GM12878 (cell line): ENCODE measurements at regions of chr7 and their contacts with region 1.

Region 1: DNA sequence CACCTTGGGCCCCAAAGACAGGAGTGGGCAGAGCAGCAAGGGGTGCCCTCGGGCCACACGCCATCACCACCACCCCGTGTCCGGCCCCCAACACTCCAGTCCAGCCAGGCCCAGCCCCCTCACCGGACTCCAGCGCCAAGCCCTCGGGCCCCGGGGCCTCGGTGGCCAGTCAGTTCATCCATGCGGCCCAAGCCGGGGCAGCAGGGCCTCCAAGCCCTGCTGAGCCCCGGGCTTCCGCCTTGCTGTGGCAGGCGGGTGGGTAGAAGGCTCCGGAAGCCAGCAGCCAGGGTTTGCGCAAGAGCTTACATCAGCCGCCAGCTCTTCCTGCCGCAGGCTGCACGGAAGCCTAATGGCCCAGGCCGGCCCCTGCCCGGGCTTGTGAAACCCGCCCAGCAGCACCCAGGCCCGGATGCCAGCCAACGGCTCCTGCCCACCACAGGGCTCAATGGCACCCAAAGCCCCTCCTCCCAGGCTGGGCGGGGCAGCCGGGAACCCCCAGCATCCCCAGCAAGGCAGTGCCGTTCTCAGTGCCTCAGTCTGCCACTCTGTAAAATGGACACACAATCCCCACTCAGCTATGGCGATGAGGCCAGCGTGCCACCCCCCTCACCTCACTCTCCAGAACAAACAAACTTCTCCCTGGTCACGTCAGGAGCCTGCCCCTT is 26.5 kb downstream of the TNRC18 start:
- DNase-seq: peak; percentile 77
- ATAC-seq: peak; percentile 96
- H3K4me3 ChIP-seq: peak overlapping the region; percentile 96
- H3K27ac ChIP-seq: peak overlapping the region; percentile 88
- H3K4me1 ChIP-seq: peaks cover 5% of the 10 kb centered on the region; the same call in 1 of the 2 replicates
- H3K27me3 ChIP-seq: no peaks in the 10 kb centered on the region
- CTCF ChIP-seq: no peak
- EP300 ChIP-seq: peak in 1 of 2 experiments; percentile 46; a peak in 2 of 4 replicates
- POLR2A ChIP-seq: peak; percentile 82
- RAD21 ChIP-seq: no peak

Region 2: DNA sequence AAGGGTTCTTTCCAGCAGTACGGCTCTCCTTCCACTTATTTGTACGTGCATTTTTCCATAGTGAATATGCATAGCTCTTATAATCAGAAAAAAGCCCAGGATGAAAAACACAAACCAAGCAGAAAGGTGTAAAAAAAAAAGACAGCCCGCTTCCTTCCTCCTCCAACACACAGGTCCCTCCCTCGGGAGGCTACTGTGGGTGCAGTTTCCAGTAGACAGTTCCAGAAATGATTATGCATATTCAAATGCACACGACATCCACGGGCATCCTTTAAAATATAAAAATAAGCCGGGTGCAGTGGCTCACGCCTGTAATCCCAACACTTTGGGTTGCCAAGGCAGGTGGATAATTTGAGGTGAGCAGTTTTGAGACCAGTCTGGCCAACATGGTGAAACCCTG is 33.4 kb before region 1 on chr7:
- CTCF ChIA-PET with region 1: interaction called, 34 read pairs
- POLR2A ChIA-PET with region 1: interaction called, 7 read pairs
- RAD21 ChIA-PET with region 1: interaction called, 18 read pairs
- SMC1A ChIA-PET with region 1: interaction called, 7 read pairs
- in situ Hi-C with region 1: no loop called
- intact Hi-C with region 1: no loop called
- DNase-seq: no peak
- ATAC-seq: peak; percentile 38; the same call in 2 of the 3 replicates
- H3K4me3 ChIP-seq: peak overlapping the region; percentile 16; the same call in 1 of the 2 replicates
- H3K27ac ChIP-seq: no peak overlapping the region
- H3K4me1 ChIP-seq: peaks cover 16% of the 10 kb centered on the region
- H3K27me3 ChIP-seq: no peaks in the 10 kb centered on the region
- CTCF ChIP-seq: no peak
- EP300 ChIP-seq: no peak
- POLR2A ChIP-seq: no peak
- RAD21 ChIP-seq: no peak

Region 3: DNA sequence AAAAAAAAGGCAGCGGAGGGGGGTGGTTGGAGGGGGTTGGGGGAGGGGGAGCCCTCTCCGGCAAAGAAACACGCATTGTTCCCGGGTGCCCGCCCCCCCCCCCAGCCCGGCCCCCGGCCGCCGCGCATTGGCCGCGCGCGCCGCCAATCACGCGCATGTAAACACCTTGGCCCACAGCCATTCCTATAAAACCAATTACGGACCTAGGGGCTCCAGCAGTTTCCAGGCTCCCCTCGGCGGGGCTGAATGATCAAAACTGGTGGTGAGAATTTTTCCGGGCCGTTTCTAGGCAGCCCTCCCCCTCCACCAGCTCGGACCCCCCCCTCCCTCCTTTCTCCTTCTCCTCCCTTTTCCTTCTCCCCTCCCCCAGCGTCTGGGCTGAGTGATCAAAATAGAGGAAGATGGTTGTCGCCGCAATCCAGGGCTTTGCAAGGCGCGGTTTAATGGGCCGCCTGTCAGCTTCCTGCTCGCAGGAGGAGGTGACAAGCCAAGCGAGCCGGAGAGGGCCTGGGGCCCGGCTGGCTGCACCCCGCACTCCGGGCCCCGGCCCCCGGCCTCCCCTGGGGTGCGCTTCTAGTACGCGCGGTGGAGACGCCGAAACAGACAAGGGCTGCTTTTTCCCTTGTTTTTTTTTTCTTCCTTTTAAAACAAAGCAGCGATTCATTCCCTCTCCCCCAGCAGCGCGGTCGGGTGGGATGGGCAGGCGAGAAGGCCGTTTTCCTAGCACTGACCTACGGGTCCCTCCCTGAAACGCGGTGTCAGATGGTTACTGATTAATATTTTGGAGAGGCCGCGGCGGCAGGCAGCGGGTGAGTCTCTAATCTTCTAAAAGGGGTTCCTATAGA is 26.9 kb after region 1 on chr7:
- CTCF ChIA-PET with region 1: interaction called, 14 read pairs
- POLR2A ChIA-PET with region 1: interaction called, 19 read pairs
- RAD21 ChIA-PET with region 1: no interaction called
- SMC1A ChIA-PET with region 1: interaction called, 14 read pairs
- in situ Hi-C with region 1: no loop called
- intact Hi-C with region 1: no loop called
- DNase-seq: no peak
- ATAC-seq: peak; percentile 39
- H3K4me3 ChIP-seq: peak overlapping the region; percentile 53; the same call in 1 of the 2 replicates
- H3K27ac ChIP-seq: no peak overlapping the region
- H3K4me1 ChIP-seq: peaks cover 10% of the 10 kb centered on the region
- H3K27me3 ChIP-seq: peaks cover 29 to 62% of the 10 kb centered on the region in 2 experiments
- CTCF ChIP-seq: no peak
- EP300 ChIP-seq: no peak
- POLR2A ChIP-seq: no peak
- RAD21 ChIP-seq: no peak

Region 4: GRCh38 chr7:5435289-5436002 is 38.3 kb after region 1 on chr7:
- CTCF ChIA-PET with region 1: interaction called, 6 read pairs
- POLR2A ChIA-PET with region 1: interaction called, 6 read pairs
- RAD21 ChIA-PET with region 1: interaction called, 23 read pairs
- SMC1A ChIA-PET with region 1: interaction called, 8 read pairs
- in situ Hi-C with region 1: no loop called
- intact Hi-C with region 1: no loop called
- DNase-seq: peak; percentile 41
- ATAC-seq: peak; percentile 91
- H3K4me3 ChIP-seq: no peak overlapping the region
- H3K27ac ChIP-seq: no peak overlapping the region
- H3K4me1 ChIP-seq: peaks cover 10% of the 10 kb centered on the region
- H3K27me3 ChIP-seq: peaks cover 4 to 5% of the 10 kb centered on the region in 2 experiments; a peak in 3 of 4 replicates
- CTCF ChIP-seq: no peak
- EP300 ChIP-seq: peak in 1 of 2 experiments; percentile 45; a peak in 1 of 4 replicates
- POLR2A ChIP-seq: no peak
- RAD21 ChIP-seq: no peak

Region 5: DNA sequence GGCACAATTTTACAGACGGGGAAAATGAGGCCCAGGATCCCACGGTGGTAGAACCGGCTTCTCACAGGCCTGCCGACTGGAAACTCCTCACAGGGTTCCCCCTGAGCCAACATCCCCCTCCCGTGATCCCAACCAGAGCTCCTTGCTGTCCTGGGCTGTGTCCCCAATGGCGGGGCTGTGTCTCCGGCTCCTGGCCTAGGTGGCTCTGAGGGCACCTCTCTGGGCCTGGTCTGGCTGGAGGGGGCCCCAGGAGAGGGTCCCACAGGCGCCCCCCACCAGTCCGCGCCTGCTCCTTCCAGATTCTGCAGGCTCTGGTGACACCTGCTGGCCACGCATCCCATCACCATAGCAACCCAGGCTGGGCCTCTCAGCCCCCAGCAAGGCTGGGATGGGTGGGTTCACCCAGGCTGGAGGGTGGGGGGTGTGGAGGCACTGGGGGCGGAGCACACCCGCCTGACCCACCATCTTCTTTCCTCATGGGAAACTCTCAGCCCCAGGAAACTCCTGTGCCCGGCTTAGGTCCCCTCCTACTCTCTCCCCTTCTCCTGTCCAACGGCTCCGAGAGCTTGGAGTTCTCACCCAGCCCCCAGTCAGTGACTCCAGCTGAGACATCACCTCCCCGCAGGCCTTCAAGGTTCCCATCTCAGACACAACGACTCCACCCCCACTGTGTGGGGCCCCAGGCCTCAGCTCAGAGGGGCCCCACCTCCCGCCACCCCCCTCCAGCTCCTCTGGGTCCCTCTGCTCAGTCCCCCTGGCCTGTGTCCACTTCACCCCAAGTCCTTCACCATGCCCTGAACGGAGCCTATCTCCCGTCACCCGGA is 53.6 kb after region 1 on chr7:
- CTCF ChIA-PET with region 1: interaction called, 80 read pairs
- POLR2A ChIA-PET with region 1: interaction called, 10 read pairs
- RAD21 ChIA-PET with region 1: interaction called, 84 read pairs
- SMC1A ChIA-PET with region 1: interaction called, 41 read pairs
- in situ Hi-C with region 1: no loop called
- intact Hi-C with region 1: no loop called
- DNase-seq: no peak
- ATAC-seq: peak; percentile 92
- H3K4me3 ChIP-seq: no peak overlapping the region
- H3K27ac ChIP-seq: no peak overlapping the region
- H3K4me1 ChIP-seq: no peaks in the 10 kb centered on the region
- H3K27me3 ChIP-seq: no peaks in the 10 kb centered on the region; a peak in 1 of 4 replicates
- CTCF ChIP-seq: peak; percentile 48 to 70 (median 61)
- EP300 ChIP-seq: no peak
- POLR2A ChIP-seq: no peak
- RAD21 ChIP-seq: peak; percentile 74